A673 (cell line): ENCODE measurements at regions of chr20 and their contacts with region 1.

Region 1: DNA sequence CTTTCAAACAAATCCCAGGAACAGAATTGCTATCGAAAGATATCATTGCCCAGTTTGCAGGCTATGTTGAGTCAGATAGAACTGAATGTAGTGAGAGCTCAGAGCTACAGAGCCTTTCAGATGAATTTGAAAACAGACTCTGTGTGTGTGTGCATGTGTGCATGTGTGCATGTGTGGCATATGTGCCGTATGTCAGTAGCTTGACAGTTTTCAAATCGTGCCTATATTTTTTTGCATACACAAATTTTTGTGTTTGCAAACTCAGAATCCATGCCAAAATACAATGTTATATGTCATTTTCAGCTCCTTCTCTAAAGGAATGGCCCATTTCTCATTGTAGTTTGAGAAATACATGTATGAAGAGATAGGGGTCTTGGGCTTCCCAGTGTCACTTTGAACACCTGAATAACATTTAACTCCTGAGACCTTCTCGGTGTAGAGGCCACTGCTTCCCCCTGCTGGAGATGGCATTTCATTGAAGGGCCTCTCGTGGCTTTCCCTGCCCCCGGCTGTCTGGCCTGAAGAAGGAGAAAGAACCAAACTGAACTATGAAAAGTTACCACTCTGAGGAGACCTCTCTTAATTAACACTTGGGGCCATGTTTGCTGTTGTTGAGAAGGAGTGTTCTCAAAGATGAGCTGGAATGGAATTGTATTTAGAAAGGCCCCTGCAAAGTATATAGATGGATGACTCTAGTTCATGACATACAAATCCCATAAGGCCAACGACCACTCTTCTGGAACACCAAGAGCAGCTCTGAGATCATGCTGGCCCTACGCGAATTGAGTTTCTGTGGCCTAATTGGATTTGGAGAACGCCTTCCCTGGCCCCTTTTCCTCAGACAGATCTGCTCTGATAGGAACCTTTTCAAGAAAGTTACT is 58.7 kb downstream of the VAPB start:
- DNase-seq: peak; percentile 63
- H3K4me3 ChIP-seq: no peak overlapping the region
- H3K27ac ChIP-seq: no peak overlapping the region
- H3K4me1 ChIP-seq: no peaks in the 10 kb centered on the region
- H3K27me3 ChIP-seq: no peaks in the 10 kb centered on the region
- CTCF ChIP-seq: peak; percentile 68

Region 2: DNA sequence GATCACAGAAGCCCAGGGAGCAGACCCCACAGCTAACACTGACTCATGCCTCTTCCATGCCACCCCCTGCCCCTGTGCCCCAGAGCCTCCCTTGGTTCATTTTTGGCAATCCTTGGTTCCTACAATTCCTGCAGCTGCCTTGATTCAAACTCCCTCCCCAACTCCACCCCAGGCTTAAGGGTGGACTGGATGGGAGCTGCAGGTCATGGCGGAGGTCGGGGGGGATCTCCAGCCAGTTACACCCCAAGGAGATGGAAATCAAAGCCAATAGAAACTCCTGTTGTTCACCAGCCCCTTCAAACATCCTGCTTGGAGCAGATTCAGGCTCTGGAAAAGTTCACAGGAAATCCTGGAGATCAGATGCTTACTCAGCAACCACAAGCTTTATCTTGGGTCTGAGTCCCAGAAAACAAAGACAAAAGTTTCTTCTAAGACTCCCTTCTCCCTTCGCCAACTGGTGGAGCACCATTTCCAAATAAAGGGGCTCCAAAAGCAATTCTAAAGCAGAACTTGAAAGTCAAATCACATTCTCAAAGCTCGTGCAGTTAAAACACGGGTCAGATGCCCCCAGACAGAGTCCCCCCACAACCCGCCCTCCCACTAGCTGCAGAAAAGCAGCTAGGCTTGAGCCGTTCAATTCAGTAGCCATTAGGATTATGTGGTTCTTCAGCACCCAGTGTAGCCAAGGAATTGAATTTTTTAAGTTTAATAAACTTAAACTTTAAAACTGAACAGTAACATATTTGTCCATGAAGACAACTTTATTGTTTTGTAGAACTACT is 368.8 kb before region 1 on chr20:
- CTCF ChIA-PET with region 1: no interaction called
- POLR2A ChIA-PET with region 1: no interaction called
- intact Hi-C with region 1: no loop called
- DNase-seq: peak; percentile 28
- H3K4me3 ChIP-seq: no peak overlapping the region
- H3K27ac ChIP-seq: no peak overlapping the region
- H3K4me1 ChIP-seq: peaks cover 4% of the 10 kb centered on the region
- H3K27me3 ChIP-seq: no peaks in the 10 kb centered on the region
- CTCF ChIP-seq: no peak

Region 3: GRCh38 chr20:58236612-58237330 is 211.0 kb before region 1 on chr20:
- CTCF ChIA-PET with region 1: no interaction called
- POLR2A ChIA-PET with region 1: no interaction called
- intact Hi-C with region 1: loop called (anchors 2 kb)
- DNase-seq: peak; percentile 84
- H3K4me3 ChIP-seq: peak overlapping the region; percentile 43
- H3K27ac ChIP-seq: no peak overlapping the region
- H3K4me1 ChIP-seq: no peaks in the 10 kb centered on the region
- H3K27me3 ChIP-seq: no peaks in the 10 kb centered on the region
- CTCF ChIP-seq: peak; percentile 97

Region 4: DNA sequence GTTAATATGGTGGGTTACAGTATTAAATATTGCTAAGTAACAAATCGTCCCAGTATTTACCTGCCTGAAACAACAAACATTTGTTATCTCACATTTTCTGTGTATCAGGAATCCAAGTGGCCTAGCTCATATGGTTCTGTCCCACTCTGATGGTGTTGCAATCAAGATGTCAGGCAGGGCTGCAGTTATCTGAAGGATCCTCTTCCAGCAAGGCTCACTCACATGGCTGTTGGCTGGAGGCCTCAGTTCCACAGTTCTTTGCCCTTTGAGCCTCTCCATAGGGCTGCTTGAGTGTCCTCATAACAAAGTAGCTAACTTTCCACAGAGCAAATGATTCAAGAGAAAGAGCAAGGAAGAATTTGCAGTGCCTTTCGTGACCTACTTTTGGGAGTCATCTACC is 120.5 kb before region 1 on chr20:
- CTCF ChIA-PET with region 1: no interaction called
- POLR2A ChIA-PET with region 1: no interaction called
- intact Hi-C with region 1: loop called (anchors 10 kb)
- DNase-seq: no peak
- H3K4me3 ChIP-seq: no peak overlapping the region
- H3K27ac ChIP-seq: no peak overlapping the region
- H3K4me1 ChIP-seq: no peaks in the 10 kb centered on the region
- H3K27me3 ChIP-seq: no peaks in the 10 kb centered on the region
- CTCF ChIP-seq: no peak